CD4-positive, alpha-beta T cell (primary cell): ENCODE measurements at regions of chr7 and their contacts with region 1.

Region 1: GRCh38 chr7:28298870-28299518 is 113.3 kb upstream of the CREB5 start:
- DNase-seq: peak in 2 of 14 experiments; percentile 8 to 14
- ATAC-seq: no peak
- H3K4me3 ChIP-seq: no peak overlapping the region
- H3K4me3 Mint-ChIP-seq: no peak overlapping the region
- H3K27ac ChIP-seq: no peak overlapping the region
- H3K27ac Mint-ChIP-seq: no peak overlapping the region
- H3K4me1 ChIP-seq: no peaks in the 10 kb centered on the region
- H3K4me1 Mint-ChIP-seq: no peaks in the 10 kb centered on the region
- H3K27me3 ChIP-seq: no peaks in the 10 kb centered on the region
- H3K27me3 Mint-ChIP-seq: peaks cover 9% of the 10 kb centered on the region
- CTCF ChIP-seq: peak; percentile 14

Region 2: GRCh38 chr7:28447071-28447470 is 148.1 kb after region 1 on chr7:
- CTCF ChIA-PET with region 1: no interaction called
- POLR2A ChIA-PET with region 1: no interaction called
- intact Hi-C with region 1: no loop called
- DNase-seq: no peak
- ATAC-seq: no peak
- H3K4me3 ChIP-seq: no peak overlapping the region
- H3K4me3 Mint-ChIP-seq: no peak overlapping the region
- H3K27ac ChIP-seq: no peak overlapping the region
- H3K27ac Mint-ChIP-seq: no peak overlapping the region
- H3K4me1 ChIP-seq: no peaks in the 10 kb centered on the region
- H3K4me1 Mint-ChIP-seq: no peaks in the 10 kb centered on the region
- H3K27me3 ChIP-seq: no peaks in the 10 kb centered on the region
- H3K27me3 Mint-ChIP-seq: peaks cover 19% of the 10 kb centered on the region
- CTCF ChIP-seq: no peak

Region 3: DNA sequence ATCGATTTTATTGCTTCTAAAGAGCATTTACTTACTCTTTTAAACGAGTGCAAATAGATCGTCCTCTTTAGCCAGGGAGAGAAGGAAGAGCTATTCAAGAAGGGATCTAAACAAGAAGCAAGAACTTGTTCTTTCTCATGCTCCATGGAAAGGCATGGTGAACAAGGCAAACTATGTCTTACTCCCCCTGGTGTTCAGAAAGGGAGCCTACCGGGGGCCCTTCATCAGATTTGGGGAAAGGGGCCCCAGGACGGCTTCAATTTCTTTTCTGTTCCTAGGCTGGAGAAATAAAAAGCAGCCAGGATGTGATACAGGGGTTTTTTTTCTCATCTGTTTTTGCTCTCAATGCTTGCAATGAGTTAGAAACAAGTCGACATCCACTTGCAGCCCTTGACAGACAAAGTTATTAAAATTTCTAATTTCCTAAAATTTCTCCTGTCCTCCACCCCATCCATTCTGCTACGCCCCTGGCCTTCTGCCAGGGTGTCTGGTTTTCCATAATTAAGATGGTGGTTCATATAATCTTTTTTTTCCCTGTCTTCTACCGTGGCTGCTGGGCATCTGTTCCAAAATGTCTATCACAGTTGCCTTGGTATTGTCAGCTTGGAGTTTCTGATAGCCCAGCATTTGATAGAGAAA is 327.7 kb after region 1 on chr7:
- CTCF ChIA-PET with region 1: no interaction called
- POLR2A ChIA-PET with region 1: no interaction called
- intact Hi-C with region 1: loop called in 1 of 2 experiments (anchors 5 kb)
- DNase-seq: peak in 3 of 14 experiments; percentile 1 to 20 (median 15)
- ATAC-seq: no peak
- H3K4me3 ChIP-seq: no peak overlapping the region
- H3K4me3 Mint-ChIP-seq: no peak overlapping the region
- H3K27ac ChIP-seq: no peak overlapping the region
- H3K27ac Mint-ChIP-seq: no peak overlapping the region
- H3K4me1 ChIP-seq: no peaks in the 10 kb centered on the region
- H3K4me1 Mint-ChIP-seq: no peaks in the 10 kb centered on the region
- H3K27me3 ChIP-seq: peaks cover 0 to 4% of the 10 kb centered on the region in 2 experiments
- H3K27me3 Mint-ChIP-seq: peaks cover 9% of the 10 kb centered on the region
- CTCF ChIP-seq: peak; percentile 32

Region 4: DNA sequence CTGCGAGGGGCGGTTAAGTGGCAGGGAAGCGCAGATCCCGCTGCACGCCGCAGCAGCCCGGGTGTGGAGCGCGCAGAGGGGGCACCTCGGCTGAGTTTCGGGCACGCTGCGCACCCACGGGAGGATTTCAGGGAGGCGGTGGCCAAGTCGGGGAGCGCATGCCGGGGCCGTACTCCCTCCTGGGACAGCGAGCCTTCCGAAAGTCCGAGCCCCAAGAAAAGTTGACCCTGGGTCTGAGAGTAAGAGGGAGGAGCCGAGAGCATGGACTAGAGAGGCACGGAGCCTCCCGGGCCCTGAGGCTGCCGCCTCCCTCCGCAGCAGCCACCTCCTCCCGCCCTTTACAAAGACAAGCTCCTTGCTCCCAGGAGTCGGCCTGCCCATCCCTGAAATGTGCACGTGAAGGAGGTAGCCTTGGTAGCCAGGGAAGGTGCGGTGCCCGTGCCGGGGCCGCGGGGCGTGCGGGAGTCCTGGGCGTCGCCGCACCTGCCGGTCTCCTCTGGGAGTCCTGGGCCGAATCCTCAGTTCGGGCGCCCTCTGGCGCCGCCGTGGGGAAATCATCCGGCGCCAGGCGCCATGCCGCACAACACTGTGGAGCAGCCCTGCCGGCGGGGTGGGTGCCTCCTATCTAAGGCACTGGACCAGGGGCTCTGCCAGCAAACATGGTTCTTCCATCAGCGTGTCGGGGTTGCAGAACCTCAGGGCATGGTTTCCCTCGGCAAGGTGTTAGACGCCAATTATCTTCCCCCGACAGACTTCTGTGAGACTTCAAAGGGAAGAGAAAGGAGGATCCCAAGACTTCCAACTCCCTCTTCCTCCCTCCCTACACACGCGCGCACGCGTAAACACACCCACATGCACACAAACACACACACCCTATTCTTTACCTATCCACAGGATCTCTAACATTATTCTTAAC is 555.1 kb after region 1 on chr7:
- CTCF ChIA-PET with region 1: no interaction called
- POLR2A ChIA-PET with region 1: no interaction called
- intact Hi-C with region 1: loop called in 1 of 2 experiments (anchors 2 kb)
- DNase-seq: peak; percentile 23 to 71 (median 46)
- ATAC-seq: peak; percentile 88
- H3K4me3 ChIP-seq: peak overlapping the region; percentile 47
- H3K4me3 Mint-ChIP-seq: peak overlapping the region; percentile 68
- H3K27ac ChIP-seq: no peak overlapping the region
- H3K27ac Mint-ChIP-seq: no peak overlapping the region
- H3K4me1 ChIP-seq: peaks cover 10% of the 10 kb centered on the region
- H3K4me1 Mint-ChIP-seq: peaks cover 5% of the 10 kb centered on the region
- H3K27me3 ChIP-seq: peaks cover 24 to 44% of the 10 kb centered on the region in 2 experiments
- H3K27me3 Mint-ChIP-seq: peaks cover 82% of the 10 kb centered on the region
- CTCF ChIP-seq: peak; percentile 71